ENCODE measurements at regions of chr17 and their contacts with region 1.

Region 1: DNA sequence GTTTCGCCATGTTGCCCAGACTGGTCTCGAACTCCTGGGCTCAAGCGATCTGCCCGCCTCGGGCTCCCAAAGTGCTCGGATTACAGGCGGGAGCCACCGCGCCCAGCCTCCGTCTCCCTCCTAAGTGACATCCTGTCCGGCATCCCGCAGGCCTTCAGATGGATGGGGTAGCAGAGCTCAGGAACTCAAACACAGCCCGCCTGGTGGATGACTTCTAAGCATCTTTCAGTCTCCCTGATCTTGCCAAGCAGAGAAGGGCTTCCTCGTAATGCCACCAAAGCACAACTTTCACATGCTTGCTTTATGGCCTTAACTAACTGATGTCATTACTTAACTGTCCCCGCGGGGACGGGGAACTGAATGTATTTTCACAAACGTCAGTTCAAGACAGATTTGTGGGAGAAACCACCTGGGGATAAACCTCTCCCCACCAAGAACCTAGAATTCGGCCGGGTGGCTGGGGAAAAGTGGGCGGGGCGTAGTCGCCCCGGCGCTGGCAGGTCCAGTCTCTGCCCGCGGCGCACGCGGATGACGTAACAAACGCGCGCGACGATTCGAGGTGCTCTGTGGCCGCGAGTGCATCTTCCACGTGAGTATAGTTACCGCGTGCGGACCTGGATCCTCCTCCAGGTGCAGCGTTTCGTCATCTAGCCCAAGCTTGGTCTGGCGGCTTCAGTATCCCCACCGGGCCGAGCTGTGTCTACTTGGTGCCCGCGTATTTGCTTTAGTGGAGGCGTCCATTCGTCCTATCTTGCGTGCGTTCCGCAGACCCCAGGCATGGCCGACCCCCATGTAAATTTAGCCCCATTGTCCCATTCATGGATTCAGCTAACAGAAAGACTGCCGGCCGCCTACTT is at the start of gene PFAS:
- DNase-seq: peak; percentile 89 to 92
- ATAC-seq: peak; percentile 80 to 81
- H3K4me3 ChIP-seq: peak within 1 kb of the TSS; percentile 82 to 99 (median 92)
- H3K27ac ChIP-seq: peak within 1 kb of the TSS; percentile 96 to 100 (median 98)
- H3K4me1 ChIP-seq: peaks cover 8 to 13% of the 10 kb centered on the region in 2 donors
- H3K27me3 ChIP-seq: no peaks in the 10 kb centered on the region
- CTCF ChIP-seq: peak in 2 of 5 experiments; percentile 11 to 33
- POLR2A ChIP-seq: peak; percentile 37 to 63
- total RNA-seq, gene PFAS: 2.6 to 8.4 (median 6.5) TPM

Region 2: DNA sequence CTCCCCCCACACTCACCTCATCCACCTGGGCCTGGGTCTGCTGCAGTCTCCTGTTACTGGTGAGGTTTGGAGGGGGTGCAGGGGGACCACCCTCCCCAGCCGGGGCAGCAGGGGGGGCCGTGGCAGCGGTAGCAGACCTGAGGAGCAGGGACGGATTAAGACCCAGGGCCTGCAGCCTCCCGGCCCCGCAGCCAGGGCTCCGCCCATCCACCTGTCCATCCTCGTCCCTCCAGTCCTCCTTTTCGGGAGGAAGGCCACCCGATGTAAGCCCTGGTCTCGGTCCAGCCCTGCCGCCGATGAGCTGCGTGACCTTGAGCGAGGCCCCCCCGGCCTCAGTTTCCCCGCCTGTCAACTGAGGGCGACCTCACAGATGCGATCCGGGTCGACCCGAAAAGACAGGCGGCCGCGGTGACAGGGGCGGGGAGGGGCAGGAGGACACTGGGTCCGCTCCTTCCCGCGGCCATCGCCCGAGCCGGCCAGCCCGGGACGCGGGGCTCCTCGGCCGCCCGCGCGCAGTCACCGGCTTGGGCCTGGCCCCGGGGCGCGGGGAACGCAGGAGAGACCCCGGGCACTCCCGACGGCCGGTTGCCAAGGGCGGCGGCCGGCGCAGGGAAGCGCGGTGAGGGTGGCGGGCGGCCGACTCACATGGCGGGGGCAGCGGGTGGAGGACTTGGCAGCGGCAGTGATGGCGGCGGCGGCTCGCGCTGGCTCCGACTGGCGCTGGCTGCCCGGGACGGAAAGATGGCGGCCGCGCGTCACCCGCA is 86.6 kb before region 1 on chr17 and contains the start of gene VAMP2:
- in situ Hi-C with region 1: no loop called
- intact Hi-C with region 1: no loop called
- DNase-seq: peak in 1 of 2 donors; percentile 79
- ATAC-seq: peak; percentile 50 to 55
- H3K4me3 ChIP-seq: peak within 1 kb of the TSS; percentile 74 to 92 (median 78)
- H3K27ac ChIP-seq: peak within 1 kb of the TSS; percentile 98 to 100 (median 99)
- H3K4me1 ChIP-seq: peaks cover 38 to 49% of the 10 kb centered on the region in 2 donors
- H3K27me3 ChIP-seq: no peaks in the 10 kb centered on the region
- CTCF ChIP-seq: peak in 3 of 5 experiments; percentile 25 to 50 (median 35)
- POLR2A ChIP-seq: peak; percentile 90 to 91
- total RNA-seq, gene VAMP2: 10.9 to 37.0 (median 25.7) TPM

Region 3: DNA sequence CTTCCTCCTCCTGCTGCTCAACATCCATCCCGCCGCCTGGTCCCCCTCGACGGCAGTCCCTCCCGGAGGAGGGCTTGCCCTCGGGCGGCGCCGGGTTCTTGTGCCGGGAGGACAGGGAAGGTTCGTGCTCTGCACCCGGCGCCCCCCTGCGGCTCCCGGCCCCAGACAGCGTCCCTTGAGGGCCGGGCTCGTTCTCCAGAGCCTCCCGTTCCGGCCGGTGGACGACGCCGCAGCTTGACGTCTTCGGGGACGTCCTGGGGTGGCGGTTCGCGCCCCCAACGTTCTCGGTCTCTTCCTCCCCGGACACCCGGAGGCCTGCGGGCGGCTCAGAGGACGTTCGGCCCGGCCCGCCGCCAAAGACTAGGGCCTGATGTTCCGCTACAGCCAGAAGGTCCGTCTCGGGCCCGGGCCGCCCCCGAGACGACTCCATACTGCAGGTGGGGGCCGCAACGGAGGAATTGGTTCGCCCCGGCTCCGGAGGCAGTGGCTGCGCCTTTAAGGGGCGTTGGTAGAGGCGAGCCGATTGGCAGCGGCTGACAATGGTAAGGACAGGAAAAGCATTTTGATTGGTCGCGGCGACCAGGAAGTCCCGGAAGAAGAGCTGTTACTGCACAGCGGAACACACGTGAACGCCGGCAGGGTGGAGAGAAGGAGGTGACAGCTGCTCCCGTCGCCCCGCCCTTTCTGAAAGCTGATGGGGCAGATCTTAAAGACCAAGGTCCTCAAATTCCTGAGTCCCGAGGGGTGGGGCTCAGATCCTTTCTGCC is 59.1 kb before region 1 on chr17 and contains the start of gene BORCS6:
- in situ Hi-C with region 1: no loop called
- intact Hi-C with region 1: loop called (anchors 1 kb)
- DNase-seq: peak; percentile 99
- ATAC-seq: peak; percentile 68 to 69
- H3K4me3 ChIP-seq: peak within 1 kb of the TSS; percentile 59 to 98 (median 84)
- H3K27ac ChIP-seq: peak within 1 kb of the TSS; percentile 86 to 99 (median 97)
- H3K4me1 ChIP-seq: peaks cover 37 to 42% of the 10 kb centered on the region in 2 donors
- H3K27me3 ChIP-seq: no peaks in the 10 kb centered on the region
- CTCF ChIP-seq: peak in 1 of 5 experiments; percentile 19
- POLR2A ChIP-seq: peak; percentile 83 to 91
- total RNA-seq, gene BORCS6: 16.2 to 34.5 (median 26.2) TPM

Region 4: GRCh38 chr17:8275421-8276290 is 26.7 kb after region 1 on chr17:
- in situ Hi-C with region 1: no loop called
- intact Hi-C with region 1: no loop called
- DNase-seq: no peak
- ATAC-seq: no peak
- H3K4me3 ChIP-seq: no peak overlapping the region
- H3K27ac ChIP-seq: no peak overlapping the region
- H3K4me1 ChIP-seq: no peaks in the 10 kb centered on the region
- H3K27me3 ChIP-seq: no peaks in the 10 kb centered on the region
- CTCF ChIP-seq: no peak
- POLR2A ChIP-seq: no peak

Region 5: DNA sequence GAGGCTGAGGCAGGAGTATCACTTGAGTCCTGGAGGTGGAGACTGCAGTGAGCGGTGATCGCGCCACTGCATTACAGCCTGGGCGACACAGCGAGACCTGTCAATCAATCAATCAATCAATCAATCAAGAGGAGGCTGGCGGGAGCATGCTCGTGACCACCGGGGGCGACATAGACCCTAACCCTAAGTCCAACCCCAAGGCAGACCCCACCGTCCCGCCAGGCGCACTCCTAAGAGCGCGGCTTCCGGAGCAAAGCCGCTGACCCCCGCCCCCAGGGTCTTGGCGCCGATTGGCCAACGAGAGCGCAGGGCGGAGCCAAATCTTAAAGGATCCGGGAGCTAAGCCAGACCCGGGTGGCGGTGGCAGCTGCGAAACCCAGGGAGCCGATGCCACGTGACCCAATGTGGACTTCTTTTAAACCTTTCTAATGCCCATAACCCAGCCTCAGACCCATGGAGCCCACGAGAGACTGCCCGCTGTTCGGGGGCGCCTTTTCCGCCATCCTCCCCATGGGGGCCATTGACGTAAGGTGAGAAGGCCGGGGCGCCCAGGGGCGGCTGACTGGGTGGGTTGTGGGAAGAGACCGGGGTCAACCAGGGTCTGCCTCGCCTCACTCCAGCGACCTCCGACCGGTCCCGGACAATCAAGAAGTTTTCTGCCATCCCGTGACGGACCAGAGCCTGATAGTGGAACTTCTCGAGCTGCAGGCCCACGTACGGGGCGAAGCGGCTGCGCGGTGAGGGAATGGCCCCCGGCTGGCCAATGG is 39.5 kb after region 1 on chr17 and contains the start of gene RANGRF:
- in situ Hi-C with region 1: loop called in 1 of 4 experiments (anchors 10 kb)
- intact Hi-C with region 1: loop called (anchors 1 kb)
- DNase-seq: peak; percentile 81 to 87
- ATAC-seq: peak; percentile 94 to 96
- H3K4me3 ChIP-seq: peak within 1 kb of the TSS; percentile 74 to 100 (median 96)
- H3K27ac ChIP-seq: peak within 1 kb of the TSS; percentile 89 to 100 (median 100)
- H3K4me1 ChIP-seq: peaks cover 16 to 24% of the 10 kb centered on the region in 2 donors
- H3K27me3 ChIP-seq: no peaks in the 10 kb centered on the region
- CTCF ChIP-seq: no peak
- POLR2A ChIP-seq: peak; percentile 59 to 68
- total RNA-seq, gene RANGRF: 6.9 to 21.2 (median 15.4) TPM

Region 6: GRCh38 chr17:8294814-8295316 is 45.9 kb after region 1 on chr17:
- in situ Hi-C with region 1: loop called in 1 of 4 experiments (anchors 10 kb)
- intact Hi-C with region 1: loop called (anchors 1 kb)
- DNase-seq: no peak
- ATAC-seq: peak; percentile 29 to 35
- H3K4me3 ChIP-seq: peak overlapping the region; percentile 72 to 90 (median 83)
- H3K27ac ChIP-seq: peak overlapping the region; percentile 95 to 97 (median 96)
- H3K4me1 ChIP-seq: peaks cover 9 to 11% of the 10 kb centered on the region in 2 donors
- H3K27me3 ChIP-seq: no peaks in the 10 kb centered on the region
- CTCF ChIP-seq: no peak
- POLR2A ChIP-seq: no peak

Region 7: DNA sequence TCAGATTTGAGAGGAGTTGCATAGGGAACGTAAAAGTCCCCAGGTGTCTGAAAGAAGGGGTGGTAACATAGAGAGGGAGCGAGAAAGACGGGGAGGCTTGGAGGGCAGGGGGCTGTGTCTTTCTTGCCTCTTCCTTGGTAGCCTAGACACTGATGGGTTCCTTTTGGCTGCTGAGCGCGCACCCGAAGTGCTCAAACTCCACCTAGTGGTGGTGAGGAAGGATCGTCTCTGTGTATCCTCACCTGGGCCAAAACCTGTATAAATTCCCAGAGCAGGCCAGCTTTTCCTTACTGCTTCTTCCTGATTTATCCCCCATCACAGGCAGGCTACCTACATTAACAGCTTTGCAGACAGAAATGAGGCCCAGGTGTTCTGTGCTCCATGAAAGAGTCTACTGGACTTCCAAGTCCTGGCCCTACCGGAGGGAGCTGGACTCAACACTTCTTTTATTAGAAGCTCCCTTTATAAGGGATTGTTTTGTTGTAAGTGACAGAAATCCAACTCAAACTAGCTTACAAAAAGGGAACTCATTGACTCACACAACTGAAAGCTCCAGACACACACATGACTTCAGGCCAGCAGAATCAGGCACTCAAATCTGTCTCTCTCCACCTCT is 51.8 kb after region 1 on chr17:
- in situ Hi-C with region 1: loop called in 1 of 4 experiments (anchors 10 kb)
- intact Hi-C with region 1: loop called (anchors 1 kb)
- DNase-seq: peak; percentile 26 to 47
- ATAC-seq: peak; percentile 93
- H3K4me3 ChIP-seq: no peak overlapping the region
- H3K27ac ChIP-seq: no peak overlapping the region
- H3K4me1 ChIP-seq: no peaks in the 10 kb centered on the region
- H3K27me3 ChIP-seq: no peaks in the 10 kb centered on the region
- CTCF ChIP-seq: peak; percentile 63 to 85 (median 80)
- POLR2A ChIP-seq: no peak

Region 8: DNA sequence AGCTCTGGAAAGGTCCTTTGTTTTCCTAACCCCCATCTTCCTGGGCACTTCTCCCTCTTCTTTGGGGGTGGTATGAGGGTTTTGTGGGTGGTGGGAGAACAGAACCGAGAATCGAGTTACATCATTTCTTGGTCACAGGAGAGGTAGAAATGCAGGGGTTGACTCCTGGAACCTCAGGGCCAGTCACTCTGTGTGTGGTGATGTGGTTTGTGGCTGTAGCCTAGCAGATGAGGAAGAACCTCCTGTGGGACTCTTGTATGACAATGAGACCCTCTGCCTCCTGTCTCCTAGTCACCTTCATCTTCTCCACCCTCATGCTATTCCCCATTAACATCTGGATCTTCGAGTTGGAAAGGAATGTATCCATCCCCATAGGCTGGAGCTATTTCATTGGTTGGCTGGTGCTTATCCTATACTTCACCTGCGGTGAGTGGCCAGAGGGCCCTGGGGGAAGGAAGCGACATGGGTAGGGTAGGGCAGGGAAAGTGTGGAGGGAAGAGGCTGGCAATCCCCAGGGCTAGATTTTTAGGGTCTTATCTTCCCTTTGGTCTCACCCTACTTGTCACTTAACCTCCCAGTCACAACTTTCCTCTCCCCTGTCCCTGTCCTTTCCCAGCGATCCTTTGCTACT is 96.2 kb after region 1 on chr17:
- in situ Hi-C with region 1: no loop called
- intact Hi-C with region 1: no loop called
- DNase-seq: no peak
- ATAC-seq: no peak
- H3K4me3 ChIP-seq: no peak overlapping the region
- H3K27ac ChIP-seq: no peak overlapping the region
- H3K4me1 ChIP-seq: no peaks in the 10 kb centered on the region
- H3K27me3 ChIP-seq: peaks cover 0 to 3% (median 3%) of the 10 kb centered on the region in 3 donors
- CTCF ChIP-seq: no peak
- POLR2A ChIP-seq: no peak

Region 9: GRCh38 chr17:9104370-9105041 is 855.5 kb after region 1 on chr17:
- in situ Hi-C with region 1: no loop called
- intact Hi-C with region 1: no loop called
- DNase-seq: no peak
- ATAC-seq: no peak
- H3K4me3 ChIP-seq: no peak overlapping the region
- H3K27ac ChIP-seq: no peak overlapping the region
- H3K4me1 ChIP-seq: no peaks in the 10 kb centered on the region
- H3K27me3 ChIP-seq: no peaks in the 10 kb centered on the region
- CTCF ChIP-seq: no peak
- POLR2A ChIP-seq: no peak